IMR-90 (cell line): ENCODE measurements at regions of chr2 and their contacts with region 1.

Region 1: DNA sequence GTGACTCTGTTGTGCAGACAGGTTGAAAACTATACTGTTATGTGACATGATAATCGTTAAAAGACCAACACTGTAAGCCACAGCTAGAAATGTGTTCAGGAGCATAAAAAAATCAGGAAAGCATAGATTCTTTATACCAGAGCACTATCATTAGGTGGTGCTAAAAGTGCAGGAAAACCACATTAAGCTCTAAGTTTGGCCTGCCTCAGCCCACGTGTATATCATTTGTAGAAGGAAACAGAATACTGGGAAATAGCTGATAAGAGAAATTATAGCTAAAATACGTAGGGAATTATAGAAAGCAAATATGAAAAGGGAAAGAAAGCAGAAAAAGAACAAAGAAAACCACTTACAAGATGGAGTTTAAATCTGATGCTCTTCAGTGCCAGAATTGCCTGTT is 26.5 kb upstream of the C2orf74 start:
- DNase-seq: peak; percentile 57
- ATAC-seq: peak; percentile 81
- H3K4me3 ChIP-seq: no peak overlapping the region
- H3K27ac ChIP-seq: no peak overlapping the region
- H3K4me1 ChIP-seq: no peaks in the 10 kb centered on the region
- H3K27me3 ChIP-seq: no peaks in the 10 kb centered on the region
- CTCF ChIP-seq: peak; percentile 68
- POLR2A ChIP-seq: no peak
- RAD21 ChIP-seq: peak; percentile 71

Region 2: DNA sequence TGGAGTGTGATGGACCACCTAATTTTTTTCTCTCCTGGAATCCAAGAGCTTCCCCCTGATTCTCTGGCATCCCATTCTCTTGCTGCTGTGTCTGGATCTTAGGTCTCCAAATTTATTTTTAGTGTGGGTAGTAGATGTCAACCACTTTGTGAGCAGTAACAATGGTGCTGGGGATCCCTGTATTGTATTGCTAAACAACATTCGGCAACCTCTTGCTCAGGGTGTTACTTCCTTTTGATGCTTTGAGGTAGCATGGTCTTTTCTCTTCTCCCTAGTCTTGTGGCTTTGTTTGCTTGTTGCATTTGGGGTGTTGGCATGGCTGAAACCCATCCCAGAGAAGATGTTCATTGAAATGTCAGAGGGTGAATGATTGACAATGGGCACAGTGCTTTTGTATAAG is 1319.4 kb before region 1 on chr2:
- CTCF ChIA-PET with region 1: no interaction called
- POLR2A ChIA-PET with region 1: no interaction called
- dilution Hi-C with region 1: no loop called
- in situ Hi-C with region 1: no loop called
- intact Hi-C with region 1: no loop called
- DNase-seq: no peak
- ATAC-seq: no peak
- H3K4me3 ChIP-seq: no peak overlapping the region
- H3K27ac ChIP-seq: no peak overlapping the region
- H3K4me1 ChIP-seq: no peaks in the 10 kb centered on the region
- H3K27me3 ChIP-seq: no peaks in the 10 kb centered on the region
- CTCF ChIP-seq: no peak
- POLR2A ChIP-seq: no peak
- RAD21 ChIP-seq: no peak

Region 3: GRCh38 chr2:61109291-61109690 is 26.2 kb before region 1 on chr2:
- CTCF ChIA-PET with region 1: no interaction called
- POLR2A ChIA-PET with region 1: no interaction called
- dilution Hi-C with region 1: no loop called
- in situ Hi-C with region 1: no loop called
- intact Hi-C with region 1: no loop called
- DNase-seq: no peak
- ATAC-seq: no peak
- H3K4me3 ChIP-seq: no peak overlapping the region
- H3K27ac ChIP-seq: no peak overlapping the region
- H3K4me1 ChIP-seq: no peaks in the 10 kb centered on the region
- H3K27me3 ChIP-seq: no peaks in the 10 kb centered on the region
- CTCF ChIP-seq: no peak
- POLR2A ChIP-seq: no peak
- RAD21 ChIP-seq: no peak

Region 4: GRCh38 chr2:61151436-61151835 is 15.9 kb after region 1 on chr2:
- CTCF ChIA-PET with region 1: no interaction called
- POLR2A ChIA-PET with region 1: no interaction called
- dilution Hi-C with region 1: no loop called
- in situ Hi-C with region 1: no loop called
- intact Hi-C with region 1: no loop called
- DNase-seq: peak; percentile 32
- ATAC-seq: no peak
- H3K4me3 ChIP-seq: no peak overlapping the region
- H3K27ac ChIP-seq: no peak overlapping the region
- H3K4me1 ChIP-seq: no peaks in the 10 kb centered on the region
- H3K27me3 ChIP-seq: no peaks in the 10 kb centered on the region
- CTCF ChIP-seq: no peak
- POLR2A ChIP-seq: no peak
- RAD21 ChIP-seq: no peak

Region 5: DNA sequence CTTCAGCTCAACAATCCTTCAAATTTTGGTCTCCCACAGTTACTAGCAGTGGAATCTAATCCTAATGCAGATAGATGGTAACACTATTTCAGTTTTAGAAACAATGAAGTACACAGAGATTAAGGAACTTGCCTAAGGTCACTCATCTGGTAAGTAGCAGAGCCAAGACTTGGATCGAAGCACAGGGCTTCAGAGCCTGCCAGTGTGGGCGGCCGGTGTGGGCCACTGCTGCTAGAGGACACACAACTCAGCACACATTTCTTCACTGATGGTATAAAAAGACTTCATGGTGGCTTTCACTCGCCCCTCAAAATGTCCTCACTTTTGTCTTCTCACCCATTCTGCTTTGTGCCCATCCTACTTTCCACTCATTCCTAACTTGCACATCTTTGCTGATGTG is 37.6 kb after region 1 on chr2:
- CTCF ChIA-PET with region 1: no interaction called
- POLR2A ChIA-PET with region 1: no interaction called
- dilution Hi-C with region 1: no loop called
- in situ Hi-C with region 1: no loop called
- intact Hi-C with region 1: no loop called
- DNase-seq: no peak
- ATAC-seq: no peak
- H3K4me3 ChIP-seq: no peak overlapping the region
- H3K27ac ChIP-seq: no peak overlapping the region
- H3K4me1 ChIP-seq: peaks cover 2% of the 10 kb centered on the region
- H3K27me3 ChIP-seq: no peaks in the 10 kb centered on the region
- CTCF ChIP-seq: no peak
- POLR2A ChIP-seq: no peak
- RAD21 ChIP-seq: no peak

Region 6: DNA sequence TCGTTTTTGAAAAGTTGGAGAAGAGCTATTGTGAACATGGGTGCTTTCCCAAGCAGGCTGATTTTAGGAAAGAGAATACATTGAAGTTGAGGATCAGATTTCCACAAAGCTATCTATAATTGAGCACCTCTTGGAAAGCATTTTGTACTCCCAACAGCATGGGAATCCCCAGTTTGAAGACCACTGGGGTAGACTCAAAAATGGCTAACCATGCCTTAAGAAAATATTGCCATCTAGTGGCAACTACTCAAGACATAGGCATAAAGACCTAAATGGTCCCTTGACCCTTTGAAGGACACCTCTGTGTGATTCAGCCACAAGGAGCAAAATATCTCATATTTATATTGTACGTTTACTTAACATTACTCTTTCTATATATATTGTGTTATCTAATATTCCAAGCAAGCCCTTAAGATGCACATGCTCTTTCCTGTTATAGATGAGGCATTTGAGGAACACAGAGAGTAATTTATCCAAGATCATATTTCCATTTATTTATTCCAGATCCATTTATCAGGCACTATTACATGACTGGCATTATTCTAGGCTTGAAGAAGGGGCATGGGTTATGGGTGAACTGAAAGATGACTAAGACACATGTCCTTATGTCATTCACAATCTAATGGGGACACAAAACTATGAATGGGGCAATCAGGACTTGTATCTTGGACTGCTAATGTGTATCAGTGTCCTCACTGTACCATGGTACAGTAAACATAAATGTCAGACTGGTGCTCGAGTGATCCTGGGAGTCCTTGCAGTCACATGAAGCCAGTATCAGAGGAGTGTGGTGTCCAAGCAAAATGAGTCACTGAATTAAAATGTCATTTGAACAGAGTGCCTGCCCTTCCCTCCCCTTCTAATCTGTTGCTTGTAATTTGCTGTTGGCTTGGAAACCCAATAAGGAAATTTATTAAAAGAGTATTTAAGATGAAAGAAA is 523.6 kb after region 1 on chr2:
- CTCF ChIA-PET with region 1: interaction called, 4 read pairs
- POLR2A ChIA-PET with region 1: no interaction called
- dilution Hi-C with region 1: no loop called
- in situ Hi-C with region 1: no loop called
- intact Hi-C with region 1: loop called (anchors 2 kb)
- DNase-seq: peak; percentile 61
- ATAC-seq: peak; percentile 85
- H3K4me3 ChIP-seq: no peak overlapping the region
- H3K27ac ChIP-seq: no peak overlapping the region
- H3K4me1 ChIP-seq: peaks cover 5% of the 10 kb centered on the region; the same call in 1 of the 2 replicates
- H3K27me3 ChIP-seq: no peaks in the 10 kb centered on the region
- CTCF ChIP-seq: peak; percentile 60
- POLR2A ChIP-seq: no peak
- RAD21 ChIP-seq: peak; percentile 72

Region 7: DNA sequence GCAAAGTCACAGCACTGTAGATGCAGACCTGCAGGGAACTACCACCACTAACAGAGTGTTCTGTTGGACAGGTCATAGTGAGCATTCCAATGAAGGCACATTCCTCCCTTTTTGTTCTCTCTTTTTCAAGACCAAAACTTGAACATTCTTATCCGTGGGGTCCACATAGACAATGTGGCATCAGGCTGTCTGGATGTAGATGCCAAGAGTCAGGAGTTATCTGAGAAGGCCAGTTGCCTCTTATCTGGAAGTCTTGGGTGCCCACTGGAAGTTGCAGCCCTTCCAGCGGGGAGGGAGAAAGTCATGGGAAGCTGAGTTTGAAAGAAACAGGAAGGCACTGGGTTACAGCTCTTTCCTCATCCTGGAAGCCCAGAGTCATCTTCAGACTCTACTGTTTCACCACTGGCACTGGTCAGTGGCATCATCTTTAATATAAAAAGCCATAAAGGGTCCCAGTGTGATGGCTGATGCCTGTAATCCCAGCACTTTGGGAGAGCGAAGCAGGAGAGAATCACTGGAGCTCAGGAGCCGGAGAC is 656.9 kb after region 1 on chr2:
- CTCF ChIA-PET with region 1: no interaction called
- POLR2A ChIA-PET with region 1: no interaction called
- dilution Hi-C with region 1: no loop called
- in situ Hi-C with region 1: no loop called
- intact Hi-C with region 1: loop called (anchors 2 kb)
- DNase-seq: no peak
- ATAC-seq: no peak
- H3K4me3 ChIP-seq: no peak overlapping the region
- H3K27ac ChIP-seq: no peak overlapping the region
- H3K4me1 ChIP-seq: peaks cover 3% of the 10 kb centered on the region
- H3K27me3 ChIP-seq: peaks cover 4% of the 10 kb centered on the region
- CTCF ChIP-seq: no peak
- POLR2A ChIP-seq: no peak
- RAD21 ChIP-seq: no peak